ENCODE measurements at regions of chr7 and their contacts with region 1.

Region 1: GRCh38 chr7:103344453-103345149 is at the start of gene DNAJC2:
- DNase-seq: peak; percentile 96
- total RNA-seq, gene DNAJC2: 42.6 and 44.3 TPM in 2 replicates

Region 2: DNA sequence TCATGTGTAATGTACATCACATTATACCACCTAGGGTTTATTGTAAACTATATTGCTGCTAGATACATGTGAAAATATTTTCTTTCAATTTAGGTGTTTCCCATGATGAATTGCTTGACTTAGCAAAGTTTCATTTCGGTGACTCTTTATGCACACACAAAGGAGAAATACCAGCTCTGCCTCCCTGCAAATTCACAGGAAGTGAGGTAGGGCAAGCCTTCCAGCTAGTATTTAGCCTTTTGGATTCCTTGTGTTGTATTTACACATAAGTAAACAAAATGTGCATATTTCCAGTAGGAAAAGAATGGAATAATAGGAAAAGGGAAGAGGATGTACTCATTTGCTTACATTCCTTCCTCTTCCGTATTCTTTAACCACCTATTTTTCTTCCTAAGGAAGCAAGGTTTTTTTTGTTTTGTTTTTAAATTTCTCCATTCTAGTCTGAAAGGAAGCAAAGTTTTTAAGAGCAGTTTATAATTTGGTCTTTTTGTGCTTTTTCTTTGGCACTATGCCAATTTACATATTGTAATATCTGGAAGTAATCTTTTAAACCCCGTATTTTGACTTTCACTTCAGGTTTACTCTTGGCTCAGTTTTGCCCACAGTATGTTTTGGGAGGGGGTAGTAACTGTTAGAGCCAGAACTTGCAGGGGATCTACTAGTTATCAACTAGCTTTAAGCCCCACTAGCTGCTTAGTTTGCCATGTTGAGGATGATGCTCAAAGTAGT is 36.9 kb before region 1 on chr7:
- in situ Hi-C with region 1: loop called (anchors 5 kb)
- DNase-seq: no peak